Esophagus squamous epithelium (tissue), 5 donors: ENCODE measurements at regions of chr2 and their contacts with region 1.

Region 1: DNA sequence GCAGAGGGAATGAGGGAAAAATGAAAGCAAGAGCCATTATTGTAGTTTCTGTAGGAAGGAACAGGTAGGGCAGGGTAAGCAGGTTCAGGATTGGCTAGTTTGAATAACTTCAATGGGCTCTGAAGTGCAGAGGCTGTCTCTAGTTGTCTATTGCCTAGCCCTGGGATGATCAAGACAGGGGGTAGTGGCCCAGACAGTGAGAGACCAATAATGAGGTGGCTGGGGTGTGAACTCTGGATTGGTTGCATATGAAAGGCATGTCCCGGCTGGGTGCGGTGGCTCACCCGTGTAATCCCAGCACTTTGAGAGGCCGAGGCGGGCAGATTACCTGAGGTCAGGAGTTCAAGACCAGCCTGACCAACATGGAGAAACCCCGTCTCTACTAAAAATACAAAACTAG is 67.5 kb upstream of the SLC38A11 start:
- DNase-seq: no peak
- H3K4me3 ChIP-seq: no peak overlapping the region
- H3K27ac ChIP-seq: no peak overlapping the region
- H3K4me1 ChIP-seq: no peaks in the 10 kb centered on the region
- H3K27me3 ChIP-seq: no peaks in the 10 kb centered on the region
- CTCF ChIP-seq: no peak
- POLR2A ChIP-seq: no peak

Region 2: GRCh38 chr2:164816046-164816445 is 206.7 kb before region 1 on chr2:
- intact Hi-C with region 1: no loop called
- DNase-seq: no peak
- H3K4me3 ChIP-seq: no peak overlapping the region
- H3K27ac ChIP-seq: peak overlapping the region in 1 of 4 donors; percentile 45
- H3K4me1 ChIP-seq: peaks cover 0 to 47% (median 0%) of the 10 kb centered on the region in 3 donors
- H3K27me3 ChIP-seq: no peaks in the 10 kb centered on the region
- CTCF ChIP-seq: no peak
- POLR2A ChIP-seq: no peak

Region 3: GRCh38 chr2:165274698-165275097 is 251.9 kb after region 1 on chr2:
- intact Hi-C with region 1: loop called (anchors 10 kb)
- DNase-seq: no peak
- H3K4me3 ChIP-seq: no peak overlapping the region
- H3K27ac ChIP-seq: peak overlapping the region in 3 of 4 donors; percentile 17 to 75 (median 36)
- H3K4me1 ChIP-seq: peaks cover 0 to 6% (median 0%) of the 10 kb centered on the region in 3 donors
- H3K27me3 ChIP-seq: no peaks in the 10 kb centered on the region
- CTCF ChIP-seq: no peak
- POLR2A ChIP-seq: no peak